Gastrocnemius medialis (tissue), 4 donors: ENCODE measurements at regions of chr12 and their contacts with region 1.

Region 1: DNA sequence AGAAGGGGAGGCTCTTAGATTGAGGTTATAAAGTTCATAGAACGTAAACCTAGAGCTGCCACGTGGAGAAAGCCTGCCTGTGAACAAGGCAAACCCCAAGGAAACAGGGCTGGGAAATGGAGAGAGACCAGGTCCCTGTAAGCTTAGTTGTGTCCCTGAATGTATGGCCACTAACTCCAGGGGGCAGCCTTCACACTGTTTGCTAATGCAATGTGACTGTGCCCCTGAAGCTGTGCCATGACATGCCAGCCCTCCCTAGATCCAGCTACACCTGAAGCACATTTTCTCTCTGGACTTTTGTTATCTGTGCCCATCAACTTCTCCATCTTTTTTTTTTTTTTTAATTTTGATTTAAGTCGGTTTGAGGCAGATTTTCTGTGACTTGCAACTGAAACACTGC is 60.6 kb upstream of the TMCC3 start:
- DNase-seq: no peak
- ATAC-seq: no peak
- H3K4me3 ChIP-seq: no peak overlapping the region
- H3K27ac ChIP-seq: no peak overlapping the region
- H3K4me1 ChIP-seq: peaks cover 29 to 30% of the 10 kb centered on the region in 2 donors
- H3K27me3 ChIP-seq: no peaks in the 10 kb centered on the region
- CTCF ChIP-seq: peak in 2 of 5 experiments; percentile 27 to 38
- POLR2A ChIP-seq: no peak

Region 2: GRCh38 chr12:94596596-94596995 is 114.3 kb before region 1 on chr12:
- in situ Hi-C with region 1: no loop called
- intact Hi-C with region 1: loop called (anchors 5 kb)
- DNase-seq: peak; percentile 38 to 88
- ATAC-seq: peak; percentile 72 to 94
- H3K4me3 ChIP-seq: no peak overlapping the region
- H3K27ac ChIP-seq: peak overlapping the region; percentile 35 to 78 (median 61)
- H3K4me1 ChIP-seq: peaks cover 65 to 69% of the 10 kb centered on the region in 2 donors
- H3K27me3 ChIP-seq: no peaks in the 10 kb centered on the region
- CTCF ChIP-seq: no peak
- POLR2A ChIP-seq: no peak

Region 3: DNA sequence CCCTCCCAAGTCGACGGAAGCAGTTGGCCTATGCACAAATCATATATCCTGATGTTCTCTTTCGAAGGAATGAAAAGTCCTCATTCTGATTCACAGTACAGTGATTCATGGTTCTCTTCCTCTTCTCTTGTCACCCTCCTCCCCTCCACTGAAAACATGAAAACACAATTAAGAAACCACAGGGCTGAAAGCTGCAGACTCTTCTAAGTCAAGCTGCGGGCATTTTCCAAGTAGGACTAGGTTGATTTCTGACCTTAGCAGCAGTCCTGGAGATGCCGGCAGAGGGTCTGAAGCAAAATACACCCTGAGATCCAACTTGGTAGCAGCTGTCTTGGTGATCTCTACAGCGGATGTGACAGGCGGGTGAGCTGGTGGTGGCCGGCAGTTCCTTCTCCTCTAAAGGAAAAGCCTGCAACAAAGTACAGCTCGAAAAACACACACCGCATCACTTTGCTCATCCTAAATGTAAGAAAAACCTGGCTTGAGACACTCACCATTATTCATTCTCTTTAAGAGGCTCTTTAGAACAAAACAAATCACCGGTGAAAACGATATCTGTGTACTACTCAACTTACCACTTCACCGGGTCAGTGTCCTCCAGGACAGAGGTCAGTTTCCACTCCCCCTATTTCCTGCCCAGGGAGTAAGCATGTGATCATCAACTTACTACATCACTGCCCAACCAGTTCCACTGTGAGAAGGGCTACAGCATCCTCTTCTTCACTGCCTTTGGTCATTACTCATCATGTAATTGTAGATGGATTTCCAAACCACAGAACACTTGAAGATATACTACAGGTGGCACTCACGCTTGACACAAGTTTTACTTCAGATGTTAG is 66.6 kb before region 1 on chr12:
- in situ Hi-C with region 1: loop called in 1 of 4 experiments (anchors 5 kb)
- intact Hi-C with region 1: loop called (anchors 2 kb)
- DNase-seq: peak; percentile 83 to 85
- ATAC-seq: peak; percentile 87 to 89
- H3K4me3 ChIP-seq: peak overlapping the region; percentile 13 to 34 (median 22)
- H3K27ac ChIP-seq: peak overlapping the region; percentile 87 to 98 (median 91)
- H3K4me1 ChIP-seq: peaks cover 69 to 80% of the 10 kb centered on the region in 2 donors
- H3K27me3 ChIP-seq: no peaks in the 10 kb centered on the region
- CTCF ChIP-seq: no peak
- POLR2A ChIP-seq: peak in 1 of 2 donors; percentile 42

Region 4: GRCh38 chr12:94839347-94839746 is 128.4 kb after region 1 on chr12:
- in situ Hi-C with region 1: no loop called
- intact Hi-C with region 1: no loop called
- DNase-seq: no peak
- ATAC-seq: no peak
- H3K4me3 ChIP-seq: no peak overlapping the region
- H3K27ac ChIP-seq: no peak overlapping the region
- H3K4me1 ChIP-seq: no peaks in the 10 kb centered on the region
- H3K27me3 ChIP-seq: no peaks in the 10 kb centered on the region
- CTCF ChIP-seq: no peak
- POLR2A ChIP-seq: no peak